Mammary epithelial cell (primary cell): ENCODE measurements at regions of chr11 and their contacts with region 1.

Region 1: GRCh38 chr11:56700242-56700913 is 1.5 kb downstream of the OR9G1 start:
- DNase-seq: peak; percentile 87
- H3K4me3 ChIP-seq: no peak overlapping the region
- H3K27ac ChIP-seq: no peak overlapping the region
- H3K4me1 ChIP-seq: no peaks in the 10 kb centered on the region
- H3K27me3 ChIP-seq: no peaks in the 10 kb centered on the region
- CTCF ChIP-seq: no peak

Region 2: GRCh38 chr11:56271092-56271491 is 429.3 kb before region 1 on chr11:
- CTCF ChIA-PET with region 1: no interaction called
- dilution Hi-C with region 1: no loop called
- in situ Hi-C with region 1: no loop called
- intact Hi-C with region 1: no loop called
- DNase-seq: peak; percentile 0
- H3K4me3 ChIP-seq: no peak overlapping the region
- H3K27ac ChIP-seq: no peak overlapping the region
- H3K4me1 ChIP-seq: no peaks in the 10 kb centered on the region
- H3K27me3 ChIP-seq: no peaks in the 10 kb centered on the region
- CTCF ChIP-seq: no peak

Region 3: GRCh38 chr11:56624661-56625110 is 75.7 kb before region 1 on chr11:
- CTCF ChIA-PET with region 1: no interaction called
- dilution Hi-C with region 1: no loop called
- in situ Hi-C with region 1: no loop called
- intact Hi-C with region 1: loop called (anchors 10 kb)
- DNase-seq: peak; percentile 71
- H3K4me3 ChIP-seq: no peak overlapping the region
- H3K27ac ChIP-seq: no peak overlapping the region
- H3K4me1 ChIP-seq: no peaks in the 10 kb centered on the region
- H3K27me3 ChIP-seq: peaks cover 2% of the 10 kb centered on the region
- CTCF ChIP-seq: peak; percentile 46 to 67

Region 4: GRCh38 chr11:56817661-56818060 is 117.3 kb after region 1 on chr11:
- CTCF ChIA-PET with region 1: no interaction called
- dilution Hi-C with region 1: no loop called
- in situ Hi-C with region 1: no loop called
- intact Hi-C with region 1: no loop called
- DNase-seq: peak; percentile 41
- H3K4me3 ChIP-seq: no peak overlapping the region
- H3K27ac ChIP-seq: no peak overlapping the region
- H3K4me1 ChIP-seq: no peaks in the 10 kb centered on the region
- H3K27me3 ChIP-seq: no peaks in the 10 kb centered on the region
- CTCF ChIP-seq: no peak